ENCODE measurements at regions of chrX and their contacts with region 1.

Region 1: GRCh38 chrX:134753718-134754008 is 95.4 kb upstream of the PLAC1 start:
- DNase-seq: no peak
- ATAC-seq: peak; percentile 53

Region 2: GRCh38 chrX:134484039-134484438 is 269.6 kb before region 1 on chrX:
- intact Hi-C with region 1: loop called (anchors 10 kb)
- DNase-seq: no peak
- ATAC-seq: no peak

Region 3: GRCh38 chrX:134520860-134521390 is 232.7 kb before region 1 on chrX:
- intact Hi-C with region 1: loop called (anchors 5 kb)
- DNase-seq: no peak
- ATAC-seq: peak; percentile 72

Region 4: GRCh38 chrX:134688839-134689238 is 64.8 kb before region 1 on chrX:
- intact Hi-C with region 1: no loop called
- DNase-seq: no peak
- ATAC-seq: no peak

Region 5: GRCh38 chrX:134807039-134807731 is 53.5 kb after region 1 on chrX:
- intact Hi-C with region 1: no loop called
- DNase-seq: peak; percentile 87
- ATAC-seq: peak; percentile 97